OCI-LY7 (cell line): ENCODE measurements at regions of chr1 and their contacts with region 1.

Region 1: DNA sequence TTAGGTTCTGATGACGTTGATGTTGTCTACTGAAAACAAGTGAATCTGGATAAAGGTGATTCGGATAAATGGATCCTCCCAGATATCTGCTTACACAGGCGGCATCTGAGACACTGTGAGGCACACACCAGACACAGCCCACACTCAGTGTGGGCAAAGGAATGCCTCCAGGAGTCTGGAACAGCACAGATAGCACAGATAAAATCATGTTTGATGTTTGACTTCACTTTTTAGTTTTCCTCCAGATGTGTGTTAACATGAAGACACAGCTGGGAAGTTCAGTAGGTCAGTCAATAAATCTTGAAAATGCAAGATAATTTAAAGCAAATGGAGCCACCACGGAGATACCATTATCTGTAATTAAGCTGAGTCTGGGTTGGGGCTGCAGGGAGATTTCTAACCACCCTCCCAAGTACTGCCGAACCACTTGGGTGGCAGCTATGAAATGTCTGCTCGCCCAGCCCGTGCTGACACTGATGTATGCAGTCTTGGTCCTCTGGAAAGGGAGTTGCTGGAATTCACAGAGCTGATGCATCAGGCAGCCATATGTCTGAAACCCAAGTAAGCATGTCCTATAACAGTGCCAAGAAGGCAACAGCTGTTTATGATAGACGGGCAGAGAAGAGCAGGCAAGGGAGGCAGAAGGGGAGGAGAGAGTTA is 11.7 kb downstream of the CAPN9 start:
- DNase-seq: no peak
- H3K4me3 ChIP-seq: no peak overlapping the region
- H3K27ac ChIP-seq: no peak overlapping the region
- H3K4me1 ChIP-seq: no peaks in the 10 kb centered on the region
- CTCF ChIP-seq: no peak

Region 2: DNA sequence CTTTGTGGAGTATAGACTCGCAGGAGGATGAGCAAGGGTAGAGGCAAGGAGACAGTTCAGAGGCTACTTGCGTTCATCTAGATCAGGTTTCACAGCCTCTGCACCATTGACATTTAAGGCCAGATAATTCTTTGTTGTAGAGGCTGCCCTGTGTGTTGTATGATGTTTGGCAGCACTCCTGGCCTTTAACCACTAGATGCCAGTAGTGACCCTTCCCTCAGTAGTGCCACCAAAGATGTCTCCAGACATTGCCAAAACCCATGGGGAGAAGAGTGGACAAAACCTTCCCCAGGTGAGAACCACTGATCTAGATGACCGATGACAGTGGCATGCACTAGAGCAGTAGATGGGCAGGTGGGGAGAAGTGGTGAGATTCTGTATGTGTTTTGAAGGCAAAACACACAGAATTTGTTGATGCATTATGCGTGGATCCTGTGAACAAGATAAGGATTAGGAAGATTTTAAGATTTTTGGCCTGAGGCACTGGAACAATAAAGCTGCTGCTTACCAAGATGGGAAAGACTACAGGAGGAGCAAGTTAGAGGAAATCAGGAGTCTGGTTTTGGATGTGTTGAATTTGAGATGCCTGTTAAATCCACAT is 126.5 kb before region 1 on chr1:
- CTCF ChIA-PET with region 1: no interaction called
- POLR2A ChIA-PET with region 1: no interaction called
- intact Hi-C with region 1: loop called (anchors 5 kb)
- DNase-seq: peak; percentile 51
- H3K4me3 ChIP-seq: no peak overlapping the region
- H3K27ac ChIP-seq: no peak overlapping the region
- H3K4me1 ChIP-seq: no peaks in the 10 kb centered on the region
- CTCF ChIP-seq: peak; percentile 79

Region 3: DNA sequence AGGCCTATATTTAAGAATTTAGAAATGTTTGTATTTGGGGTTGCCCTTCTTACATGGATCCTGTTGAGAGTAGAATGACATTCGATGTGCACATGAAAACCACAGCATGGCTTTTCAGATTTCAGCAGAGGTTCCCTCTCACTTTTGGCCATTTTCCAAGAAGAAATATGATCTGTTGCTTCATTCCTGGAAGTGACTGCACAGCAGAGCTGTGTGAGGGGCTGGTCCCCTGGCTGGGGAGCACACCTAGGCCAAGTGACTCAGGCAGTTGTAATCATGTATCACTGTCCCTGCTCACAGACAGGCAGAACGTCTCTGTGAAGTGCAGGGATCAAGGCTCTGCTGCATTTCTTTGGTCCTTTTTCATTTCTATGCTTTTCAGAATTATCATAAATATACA is 77.2 kb before region 1 on chr1:
- CTCF ChIA-PET with region 1: no interaction called
- POLR2A ChIA-PET with region 1: no interaction called
- intact Hi-C with region 1: no loop called
- DNase-seq: no peak
- H3K4me3 ChIP-seq: no peak overlapping the region
- H3K27ac ChIP-seq: no peak overlapping the region
- H3K4me1 ChIP-seq: no peaks in the 10 kb centered on the region
- CTCF ChIP-seq: no peak

Region 4: GRCh38 chr1:230743899-230744298 is 14.9 kb before region 1 on chr1:
- CTCF ChIA-PET with region 1: no interaction called
- POLR2A ChIA-PET with region 1: no interaction called
- intact Hi-C with region 1: loop called (anchors 2 kb)
- DNase-seq: no peak
- H3K4me3 ChIP-seq: no peak overlapping the region
- H3K27ac ChIP-seq: no peak overlapping the region
- H3K4me1 ChIP-seq: peaks cover 4% of the 10 kb centered on the region
- CTCF ChIP-seq: no peak

Region 5: DNA sequence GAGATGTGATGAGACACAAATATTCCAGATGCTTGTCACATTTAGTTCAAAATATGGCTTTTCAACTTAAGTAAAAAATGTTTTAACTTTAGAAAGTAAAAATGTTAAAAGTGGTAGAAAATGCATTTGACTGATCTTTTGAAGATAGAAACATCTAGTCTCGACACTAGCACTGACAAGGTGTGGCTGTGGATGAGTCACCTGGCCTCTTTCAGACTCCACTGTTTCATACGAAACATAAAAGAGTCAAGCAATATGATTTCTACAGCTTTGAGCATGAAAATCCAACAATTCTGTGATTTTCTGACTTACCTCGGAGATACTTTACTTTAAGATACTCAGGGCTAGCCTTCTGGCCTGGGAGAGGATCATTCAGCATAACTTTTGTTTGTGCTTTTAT is 172.1 kb after region 1 on chr1:
- CTCF ChIA-PET with region 1: no interaction called
- POLR2A ChIA-PET with region 1: no interaction called
- intact Hi-C with region 1: no loop called
- DNase-seq: no peak
- H3K4me3 ChIP-seq: no peak overlapping the region
- H3K27ac ChIP-seq: no peak overlapping the region
- H3K4me1 ChIP-seq: no peaks in the 10 kb centered on the region
- CTCF ChIP-seq: no peak

Region 6: DNA sequence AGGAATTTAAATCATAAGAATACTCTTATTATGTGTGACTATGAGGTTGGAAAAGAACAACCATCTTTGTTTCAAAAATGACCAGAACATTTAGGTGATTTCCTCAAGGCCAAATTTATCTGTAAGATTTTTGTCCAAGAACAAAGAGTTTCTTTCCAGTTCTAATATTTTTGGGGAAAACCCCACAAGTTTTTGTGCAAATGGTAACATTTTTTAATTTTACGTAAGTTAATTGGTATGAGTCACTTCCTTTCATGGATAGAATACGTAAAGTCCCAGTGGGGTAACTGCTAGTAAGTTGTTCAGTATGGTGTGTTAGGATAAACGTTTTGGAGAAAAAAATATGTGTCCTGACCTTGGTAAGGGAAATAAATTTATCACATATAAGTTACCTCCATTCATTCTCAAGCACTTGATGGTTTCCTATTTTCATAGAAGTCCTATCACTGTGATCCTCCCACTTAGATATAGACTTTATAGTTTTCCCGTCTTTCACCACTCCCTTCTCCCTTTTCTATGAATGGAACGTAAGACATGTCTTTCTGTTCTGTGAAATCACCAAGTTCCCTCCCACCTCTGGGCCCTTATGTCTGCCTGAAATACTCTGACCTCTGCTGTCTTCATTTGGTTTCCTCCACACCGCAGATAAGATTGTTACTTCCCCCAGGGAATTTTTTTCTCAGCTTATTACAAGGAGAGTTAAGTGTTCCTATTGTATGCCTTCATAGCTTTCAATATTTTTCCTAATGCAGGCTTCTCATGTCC is 734.8 kb after region 1 on chr1:
- CTCF ChIA-PET with region 1: no interaction called
- POLR2A ChIA-PET with region 1: no interaction called
- intact Hi-C with region 1: no loop called
- DNase-seq: no peak
- H3K4me3 ChIP-seq: no peak overlapping the region
- H3K27ac ChIP-seq: no peak overlapping the region
- H3K4me1 ChIP-seq: no peaks in the 10 kb centered on the region
- CTCF ChIP-seq: no peak